Right cardiac atrium (tissue), 5 donors: ENCODE measurements at regions of chr11 and their contacts with region 1.

Region 1: GRCh38 chr11:60130496-60130895 is 42.0 kb downstream of the MS4A2 start:
- DNase-seq: no peak
- ATAC-seq: peak; percentile 77 to 86
- H3K4me3 ChIP-seq: no peak overlapping the region
- H3K27ac ChIP-seq: no peak overlapping the region
- H3K4me1 ChIP-seq: no peaks in the 10 kb centered on the region
- H3K27me3 ChIP-seq: no peaks in the 10 kb centered on the region

Region 2: GRCh38 chr11:59812220-59812619 is 318.3 kb before region 1 on chr11:
- intact Hi-C with region 1: no loop called
- DNase-seq: no peak
- ATAC-seq: no peak
- H3K4me3 ChIP-seq: no peak overlapping the region
- H3K27ac ChIP-seq: no peak overlapping the region
- H3K4me1 ChIP-seq: peaks cover 2% of the 10 kb centered on the region
- H3K27me3 ChIP-seq: no peaks in the 10 kb centered on the region

Region 3: GRCh38 chr11:59822989-59823566 is 307.4 kb before region 1 on chr11:
- intact Hi-C with region 1: loop called (anchors 5 to 10 kb)
- DNase-seq: peak in 1 of 3 donors; percentile 34
- ATAC-seq: peak; percentile 87 to 91
- H3K4me3 ChIP-seq: no peak overlapping the region
- H3K27ac ChIP-seq: no peak overlapping the region
- H3K4me1 ChIP-seq: no peaks in the 10 kb centered on the region
- H3K27me3 ChIP-seq: no peaks in the 10 kb centered on the region

Region 4: GRCh38 chr11:59939482-59939881 is 191.0 kb before region 1 on chr11:
- intact Hi-C with region 1: no loop called
- DNase-seq: no peak
- ATAC-seq: no peak
- H3K4me3 ChIP-seq: no peak overlapping the region
- H3K27ac ChIP-seq: no peak overlapping the region
- H3K4me1 ChIP-seq: no peaks in the 10 kb centered on the region
- H3K27me3 ChIP-seq: no peaks in the 10 kb centered on the region

Region 5: GRCh38 chr11:60084631-60085273 is 45.7 kb before region 1 on chr11:
- intact Hi-C with region 1: no loop called
- DNase-seq: no peak
- ATAC-seq: no peak
- H3K4me3 ChIP-seq: no peak overlapping the region
- H3K27ac ChIP-seq: no peak overlapping the region
- H3K4me1 ChIP-seq: no peaks in the 10 kb centered on the region
- H3K27me3 ChIP-seq: no peaks in the 10 kb centered on the region